Caco-2 (cell line): ENCODE measurements at regions of chr12 and their contacts with region 1.

Region 1: DNA sequence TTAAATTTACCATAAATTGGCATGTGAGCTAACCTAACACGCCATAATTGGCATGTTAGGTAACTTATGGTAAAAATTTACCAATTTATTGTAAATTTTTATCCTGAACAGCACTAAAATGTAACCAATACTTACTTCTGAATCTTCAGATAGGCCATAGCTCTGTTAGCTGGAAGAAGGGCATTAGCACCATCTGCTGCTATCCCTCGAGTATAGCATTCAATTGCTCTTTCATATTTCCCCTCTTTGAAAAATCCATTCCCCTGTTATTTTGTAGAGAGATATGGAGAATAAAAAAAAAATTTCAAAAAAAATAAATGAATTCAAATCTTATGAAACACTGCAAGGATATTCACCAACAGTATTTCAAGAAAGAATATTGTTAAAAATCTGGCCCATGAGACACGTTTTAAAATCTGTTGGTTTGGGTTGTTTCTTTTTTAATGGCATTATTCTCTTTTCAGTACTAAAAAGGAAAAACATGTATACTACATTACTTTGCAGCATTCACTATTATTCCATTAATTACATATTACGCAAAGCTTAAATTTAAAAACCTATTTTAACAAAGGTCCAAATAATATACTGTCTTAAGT is 19.1 kb downstream of the RPAP3 start:
- DNase-seq: peak in 1 of 2 experiments; percentile 49
- H3K4me3 ChIP-seq: no peak overlapping the region
- H3K4me3 Mint-ChIP-seq: no peak overlapping the region
- H3K27ac Mint-ChIP-seq: no peak overlapping the region
- H3K4me1 ChIP-seq: no peaks in the 10 kb centered on the region; the same call in 1 of the 2 replicates
- H3K4me1 Mint-ChIP-seq: no peaks in the 10 kb centered on the region
- H3K27me3 ChIP-seq: no peaks in the 10 kb centered on the region
- H3K27me3 Mint-ChIP-seq: no peaks in the 10 kb centered on the region
- CTCF ChIP-seq: peak; percentile 56 to 86

Region 2: DNA sequence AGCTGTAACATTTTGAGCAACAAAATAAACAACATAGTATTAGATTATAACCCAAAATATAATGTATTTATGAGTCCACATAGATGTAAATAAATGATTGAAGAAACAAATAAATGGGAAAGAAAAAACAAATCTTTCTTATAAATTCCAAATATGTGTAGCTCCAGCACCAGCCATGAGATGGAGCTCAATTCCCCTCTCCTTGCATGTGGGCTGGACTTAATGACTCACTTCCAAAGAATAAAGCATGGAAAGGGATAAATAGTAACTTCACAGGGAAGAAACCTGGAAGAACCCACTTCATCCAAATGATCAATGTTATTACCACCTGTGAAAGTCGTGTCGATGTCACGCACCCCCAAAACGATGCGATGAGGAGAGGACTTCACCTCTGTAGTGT is 139.7 kb before region 1 on chr12:
- CTCF ChIA-PET with region 1: interaction called, 13 read pairs
- POLR2A ChIA-PET with region 1: no interaction called
- intact Hi-C with region 1: loop called (anchors 1 kb)
- DNase-seq: no peak
- H3K4me3 ChIP-seq: no peak overlapping the region
- H3K4me3 Mint-ChIP-seq: no peak overlapping the region
- H3K27ac Mint-ChIP-seq: no peak overlapping the region
- H3K4me1 ChIP-seq: no peaks in the 10 kb centered on the region
- H3K4me1 Mint-ChIP-seq: no peaks in the 10 kb centered on the region
- H3K27me3 ChIP-seq: no peaks in the 10 kb centered on the region
- H3K27me3 Mint-ChIP-seq: peaks cover 11% of the 10 kb centered on the region
- CTCF ChIP-seq: peak in 1 of 2 experiments; percentile 34